Activated CD4-positive, alpha-beta T cell treated with anti-CD3 and anti-CD28 coated beads for 36 hours (primary cell): ENCODE measurements at regions of chr3 and their contacts with region 1.

Region 1: DNA sequence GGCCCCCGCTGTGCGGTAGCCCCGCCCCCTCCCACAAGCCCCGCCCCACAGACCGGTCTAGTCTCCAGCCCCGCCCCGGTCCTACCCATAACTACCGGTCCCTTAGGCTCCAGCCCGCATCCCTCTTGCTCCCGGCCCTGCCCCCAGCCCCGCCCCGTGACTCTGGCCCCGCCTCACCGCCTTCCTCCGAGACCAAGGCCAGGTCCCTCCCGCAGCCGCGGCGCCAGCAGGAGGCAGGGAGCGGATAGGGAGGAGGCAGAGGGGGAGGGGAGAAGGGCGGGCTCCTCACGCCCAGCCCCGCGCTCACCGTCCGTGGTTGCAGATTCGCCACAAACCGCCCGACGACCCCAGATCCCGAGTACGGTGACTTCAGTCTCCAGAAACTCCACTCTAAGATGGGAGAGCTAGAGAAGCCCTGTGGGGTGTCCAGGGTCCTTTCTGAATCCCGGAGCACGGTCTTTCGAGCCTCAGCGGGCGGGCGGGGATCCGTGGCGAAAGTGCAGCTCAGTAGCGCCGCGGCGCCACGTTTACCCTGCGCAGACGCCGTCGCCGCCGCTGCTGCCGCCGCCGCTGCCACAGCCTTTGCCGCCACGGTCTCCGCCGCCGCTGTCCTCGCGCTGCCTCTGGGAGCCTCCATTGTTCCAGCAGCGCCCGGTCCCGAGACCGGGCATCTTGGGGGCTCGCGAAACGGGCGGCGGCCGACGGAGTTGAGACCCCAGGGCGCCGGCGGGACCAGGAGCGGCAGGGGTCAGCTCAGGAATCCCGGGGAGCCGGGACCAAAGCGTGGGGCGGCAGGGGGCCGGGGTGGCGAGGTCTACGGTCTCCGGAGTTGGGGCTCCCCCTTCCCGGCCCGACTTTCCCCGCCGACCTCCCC is at the start of gene BRPF1:
- DNase-seq: peak; percentile 100
- ATAC-seq: peak; percentile 96
- H3K4me3 Mint-ChIP-seq: peak within 1 kb of the TSS; percentile 79
- H3K27ac Mint-ChIP-seq: peak within 1 kb of the TSS; percentile 96
- H3K4me1 Mint-ChIP-seq: peaks cover 67% of the 10 kb centered on the region
- H3K27me3 Mint-ChIP-seq: no peaks in the 10 kb centered on the region
- total RNA-seq, gene BRPF1: 23.3 to 25.9 TPM

Region 2: GRCh38 chr3:9362731-9363530 is 368.5 kb before region 1 on chr3 and contains the start of gene THUMPD3:
- CTCF ChIA-PET with region 1: interaction called, 5 read pairs
- POLR2A ChIA-PET with region 1: no interaction called
- intact Hi-C with region 1: loop called in 1 of 2 experiments (anchors 1 kb)
- DNase-seq: peak; percentile 96
- ATAC-seq: peak; percentile 93
- H3K4me3 Mint-ChIP-seq: peak within 1 kb of the TSS; percentile 98
- H3K27ac Mint-ChIP-seq: peak within 1 kb of the TSS; percentile 100
- H3K4me1 Mint-ChIP-seq: peaks cover 21% of the 10 kb centered on the region
- H3K27me3 Mint-ChIP-seq: no peaks in the 10 kb centered on the region
- total RNA-seq, gene THUMPD3: 59.6 to 74.3 TPM

Region 3: DNA sequence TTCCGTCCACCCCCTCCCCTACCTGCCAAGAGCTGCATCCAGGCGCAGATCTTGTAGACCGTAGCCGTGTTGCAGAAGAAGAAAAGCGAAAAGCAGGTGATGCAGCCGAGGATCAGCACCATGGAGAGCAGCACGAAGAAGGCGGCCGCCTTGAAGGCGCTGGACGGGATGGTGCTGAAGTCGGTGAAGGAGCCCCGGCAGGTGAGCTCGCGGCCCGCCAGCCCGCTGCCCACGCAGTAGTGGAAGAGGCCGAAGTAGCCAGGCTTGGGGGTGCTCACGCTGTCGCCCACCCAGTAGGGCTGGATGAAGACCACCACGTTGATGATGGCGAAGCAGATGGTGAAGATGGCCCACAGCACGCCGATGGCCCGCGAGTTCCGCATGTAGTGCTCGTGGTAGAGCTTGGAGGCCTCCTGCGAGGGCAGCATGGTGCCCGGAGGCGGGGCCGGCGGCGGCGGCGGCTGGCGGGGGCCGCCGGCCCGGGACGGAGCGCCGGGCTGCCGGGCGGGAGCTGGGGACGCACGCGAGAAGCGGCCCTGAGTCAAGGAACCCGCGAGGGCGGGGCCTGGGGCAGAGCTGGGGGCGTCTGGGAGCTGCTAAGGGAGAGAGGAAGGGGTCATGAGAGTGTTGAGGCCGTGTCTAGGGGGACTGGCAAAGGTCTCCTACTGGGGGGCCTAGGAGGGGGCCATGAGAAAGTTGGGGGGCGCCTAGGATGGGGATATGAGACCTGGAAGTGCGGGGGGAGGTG is 179.0 kb before region 1 on chr3:
- CTCF ChIA-PET with region 1: no interaction called
- POLR2A ChIA-PET with region 1: no interaction called
- intact Hi-C with region 1: no loop called
- DNase-seq: peak; percentile 74
- ATAC-seq: peak; percentile 47
- H3K4me3 Mint-ChIP-seq: no peak overlapping the region
- H3K27ac Mint-ChIP-seq: no peak overlapping the region
- H3K4me1 Mint-ChIP-seq: peaks cover 3% of the 10 kb centered on the region
- H3K27me3 Mint-ChIP-seq: peaks cover 50% of the 10 kb centered on the region

Region 4: GRCh38 chr3:9627901-9628633 is 103.4 kb before region 1 on chr3:
- CTCF ChIA-PET with region 1: no interaction called
- POLR2A ChIA-PET with region 1: no interaction called
- intact Hi-C with region 1: no loop called
- DNase-seq: no peak
- ATAC-seq: no peak
- H3K4me3 Mint-ChIP-seq: no peak overlapping the region
- H3K27ac Mint-ChIP-seq: no peak overlapping the region
- H3K4me1 Mint-ChIP-seq: no peaks in the 10 kb centered on the region
- H3K27me3 Mint-ChIP-seq: peaks cover 6% of the 10 kb centered on the region

Region 5: GRCh38 chr3:9649791-9650521 is 81.5 kb before region 1 on chr3:
- CTCF ChIA-PET with region 1: no interaction called
- POLR2A ChIA-PET with region 1: no interaction called
- intact Hi-C with region 1: loop called (anchors 1 kb)
- DNase-seq: no peak
- ATAC-seq: peak; percentile 1
- H3K4me3 Mint-ChIP-seq: peak overlapping the region; percentile 95
- H3K27ac Mint-ChIP-seq: peak overlapping the region; percentile 92
- H3K4me1 Mint-ChIP-seq: peaks cover 24% of the 10 kb centered on the region
- H3K27me3 Mint-ChIP-seq: no peaks in the 10 kb centered on the region

Region 6: GRCh38 chr3:9749645-9750555 is 18.5 kb after region 1 on chr3 and contains the start of gene OGG1:
- CTCF ChIA-PET with region 1: interaction called, 20 read pairs
- POLR2A ChIA-PET with region 1: interaction called, 11 read pairs
- intact Hi-C with region 1: loop called (anchors 1 kb)
- DNase-seq: peak; percentile 98
- ATAC-seq: peak; percentile 94
- H3K4me3 Mint-ChIP-seq: peak within 1 kb of the TSS; percentile 87
- H3K27ac Mint-ChIP-seq: peak within 1 kb of the TSS; percentile 91
- H3K4me1 Mint-ChIP-seq: peaks cover 46% of the 10 kb centered on the region
- H3K27me3 Mint-ChIP-seq: no peaks in the 10 kb centered on the region
- total RNA-seq, gene OGG1: 36.4 to 61.6 TPM

Region 7: GRCh38 chr3:9843715-9844438 is 112.4 kb after region 1 on chr3 and contains the start of gene RPUSD3:
- CTCF ChIA-PET with region 1: interaction called, 3 read pairs
- POLR2A ChIA-PET with region 1: no interaction called
- intact Hi-C with region 1: loop called in 1 of 2 experiments (anchors 1 kb)
- DNase-seq: peak; percentile 98
- ATAC-seq: peak; percentile 97
- H3K4me3 Mint-ChIP-seq: peak within 1 kb of the TSS; percentile 99
- H3K27ac Mint-ChIP-seq: peak within 1 kb of the TSS; percentile 96
- H3K4me1 Mint-ChIP-seq: peaks cover 28% of the 10 kb centered on the region
- H3K27me3 Mint-ChIP-seq: no peaks in the 10 kb centered on the region
- total RNA-seq, gene RPUSD3: 79.2 to 81.5 TPM

Region 8: DNA sequence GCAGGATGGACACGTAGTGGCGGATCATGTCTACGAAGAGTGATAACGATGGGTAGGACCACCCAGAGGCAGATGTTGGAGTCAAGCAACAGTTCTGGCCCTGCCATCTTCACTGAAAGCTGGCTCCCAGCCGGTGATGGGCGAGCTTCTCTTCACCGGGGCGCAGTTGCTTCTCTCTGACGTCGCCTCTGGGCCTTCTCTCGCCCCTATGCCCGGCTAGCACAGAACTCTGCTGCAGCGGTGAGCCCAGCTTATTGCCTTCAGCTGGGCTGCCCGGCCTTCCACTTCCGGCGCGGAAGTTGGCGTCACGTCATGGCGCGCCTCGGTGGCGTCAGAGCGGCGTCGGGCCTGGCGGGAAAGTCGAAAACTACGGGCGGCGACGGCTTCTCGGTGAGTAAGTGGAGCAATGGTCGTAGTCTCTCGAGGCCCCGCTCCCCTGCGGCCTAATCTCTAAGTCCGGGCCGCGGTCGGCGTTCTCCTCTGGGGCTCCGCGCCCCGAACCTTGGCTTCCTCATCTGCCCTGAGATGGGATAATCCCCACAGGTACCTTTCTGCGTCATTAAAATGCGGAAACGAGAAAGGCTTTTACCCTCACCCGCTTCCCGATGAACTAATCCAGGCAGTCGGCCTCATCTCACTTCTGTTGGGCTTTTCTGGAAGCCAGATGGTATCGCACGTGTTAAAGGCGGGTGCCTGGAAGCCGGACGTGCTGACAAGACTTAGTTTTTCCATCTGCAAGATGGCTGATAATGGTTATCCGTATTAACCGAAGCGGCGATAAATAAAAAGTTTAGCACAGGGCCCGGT is 294.8 kb after region 1 on chr3 and contains the start of gene FANCD2:
- CTCF ChIA-PET with region 1: no interaction called
- POLR2A ChIA-PET with region 1: no interaction called
- intact Hi-C with region 1: loop called in 1 of 2 experiments (anchors 1 kb)
- DNase-seq: peak; percentile 95
- ATAC-seq: peak; percentile 91
- H3K4me3 Mint-ChIP-seq: peak within 1 kb of the TSS; percentile 95
- H3K27ac Mint-ChIP-seq: peak within 1 kb of the TSS; percentile 99
- H3K4me1 Mint-ChIP-seq: peaks cover 25% of the 10 kb centered on the region
- H3K27me3 Mint-ChIP-seq: no peaks in the 10 kb centered on the region
- total RNA-seq, gene FANCD2: 86.4 to 87.7 TPM